CD4-positive, alpha-beta memory T cell (primary cell): ENCODE measurements at regions of chr17 and their contacts with region 1.

Region 1: DNA sequence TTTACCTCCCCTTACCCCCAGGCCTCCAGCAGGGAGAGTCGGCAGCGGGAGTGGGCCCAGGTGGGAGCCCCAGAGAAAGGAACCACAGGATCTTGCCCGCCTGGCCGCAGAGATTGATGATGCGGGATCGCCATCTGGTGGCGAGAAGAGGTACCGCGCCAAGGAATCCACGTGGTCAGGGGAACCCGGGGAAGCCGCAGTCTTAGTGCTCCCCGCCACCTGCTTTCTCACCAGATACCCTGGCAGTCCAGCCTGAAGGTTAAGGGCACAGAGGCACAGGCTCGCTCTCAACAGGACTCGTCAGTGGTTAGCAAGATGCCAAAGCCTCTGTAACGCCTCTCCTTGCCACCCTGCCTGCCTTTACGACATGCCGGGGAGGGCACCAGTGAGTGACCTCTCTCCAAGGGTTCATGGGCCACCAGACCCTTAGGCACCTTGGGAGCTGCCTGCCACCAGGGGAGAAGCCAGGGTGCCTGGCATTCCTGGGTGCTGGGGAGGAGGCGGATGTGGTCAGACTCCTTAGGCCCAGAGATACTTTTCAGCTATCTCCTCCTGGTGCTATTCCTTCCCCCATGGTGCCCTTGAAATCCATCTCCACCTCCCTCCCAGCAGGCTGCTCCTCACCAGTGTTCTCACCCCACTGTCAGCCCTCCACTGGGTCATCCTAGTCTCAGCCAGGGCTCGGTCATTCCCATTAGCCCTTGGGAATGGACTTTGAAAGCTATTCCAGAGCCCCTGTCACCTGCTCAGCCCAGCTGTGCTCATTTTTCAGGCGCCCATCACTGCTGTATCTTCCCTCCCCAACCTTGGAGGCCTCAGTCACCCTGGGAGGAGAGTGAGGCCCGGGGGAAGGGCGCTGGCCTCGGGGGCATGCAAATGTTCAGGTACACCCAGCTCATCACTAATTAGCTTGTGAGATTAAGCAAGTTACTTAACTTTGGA is 5.5 kb upstream of the RHBDF2 start:
- DNase-seq: peak; percentile 83 to 91 (median 86)
- H3K4me3 ChIP-seq: no peak overlapping the region
- H3K4me3 Mint-ChIP-seq: peak overlapping the region in 2 of 8 donors; percentile 15 to 39
- H3K27ac ChIP-seq: no peak overlapping the region
- H3K27ac Mint-ChIP-seq: peak overlapping the region in 6 of 7 donors; percentile 13 to 90 (median 57)
- H3K4me1 ChIP-seq: peaks cover 26% of the 10 kb centered on the region
- H3K4me1 Mint-ChIP-seq: peaks cover 5 to 31% (median 23%) of the 10 kb centered on the region in 4 donors
- H3K27me3 ChIP-seq: no peaks in the 10 kb centered on the region
- H3K27me3 Mint-ChIP-seq: no peaks in the 10 kb centered on the region

Region 2: DNA sequence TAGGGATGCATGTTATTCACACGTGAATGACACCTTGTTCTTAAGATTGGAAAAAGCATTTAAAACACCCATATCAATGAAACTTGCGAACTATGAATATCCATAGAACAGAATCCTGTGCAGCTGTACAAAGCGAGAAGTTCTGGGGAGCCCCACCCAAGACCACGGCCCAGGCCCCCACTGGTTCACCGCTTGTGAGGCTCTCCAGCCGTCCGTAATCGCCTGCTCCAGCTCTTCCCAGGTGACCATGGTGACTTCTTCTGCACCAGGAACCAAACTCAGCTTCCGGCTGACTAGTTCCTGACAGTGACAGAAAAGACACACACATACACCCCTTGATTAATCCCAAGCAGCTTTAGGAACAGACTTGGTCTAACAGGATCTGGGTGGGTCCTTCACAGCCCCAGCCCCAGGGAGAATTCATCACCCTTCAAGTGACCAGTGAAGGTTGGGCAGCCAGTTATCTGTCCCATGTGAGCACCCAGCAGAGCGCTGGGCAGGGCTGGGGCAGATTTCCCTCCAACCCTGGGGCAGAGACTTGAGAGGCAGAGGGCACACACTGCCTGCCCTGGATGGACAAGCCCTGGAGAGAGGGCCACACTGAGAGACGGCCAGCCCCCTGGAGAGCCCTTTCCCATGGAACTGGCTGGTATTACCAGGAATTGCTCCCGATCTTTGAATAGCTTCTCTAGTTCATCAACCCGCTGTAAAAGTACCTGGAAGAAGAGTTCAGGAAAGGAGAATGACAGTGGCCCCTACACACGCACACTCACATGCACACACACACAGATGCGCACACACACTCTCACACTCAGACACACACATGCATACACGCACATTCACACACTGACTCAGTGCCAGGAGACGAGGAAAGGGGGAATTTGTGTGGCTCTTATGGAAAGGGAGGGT is 202.2 kb before region 1 on chr17:
- CTCF ChIA-PET with region 1: interaction called, 12 read pairs
- POLR2A ChIA-PET with region 1: no interaction called
- intact Hi-C with region 1: loop called (anchors 1 kb)
- DNase-seq: no peak
- H3K4me3 ChIP-seq: no peak overlapping the region
- H3K4me3 Mint-ChIP-seq: no peak overlapping the region
- H3K27ac ChIP-seq: no peak overlapping the region
- H3K27ac Mint-ChIP-seq: peak overlapping the region in 1 of 7 donors; percentile 71
- H3K4me1 ChIP-seq: no peaks in the 10 kb centered on the region
- H3K4me1 Mint-ChIP-seq: peaks cover 0 to 1% (median 0%) of the 10 kb centered on the region in 4 donors
- H3K27me3 ChIP-seq: no peaks in the 10 kb centered on the region
- H3K27me3 Mint-ChIP-seq: no peaks in the 10 kb centered on the region

Region 3: GRCh38 chr17:76461765-76462555 is 44.7 kb before region 1 on chr17:
- CTCF ChIA-PET with region 1: interaction called, 161 read pairs
- POLR2A ChIA-PET with region 1: interaction called, 38 read pairs
- intact Hi-C with region 1: loop called (anchors 1 kb)
- DNase-seq: no peak
- H3K4me3 ChIP-seq: no peak overlapping the region
- H3K4me3 Mint-ChIP-seq: no peak overlapping the region
- H3K27ac ChIP-seq: no peak overlapping the region
- H3K27ac Mint-ChIP-seq: peak overlapping the region in 3 of 7 donors; percentile 15 to 80 (median 73)
- H3K4me1 ChIP-seq: peaks cover 4% of the 10 kb centered on the region
- H3K4me1 Mint-ChIP-seq: peaks cover 3 to 6% (median 3%) of the 10 kb centered on the region in 4 donors
- H3K27me3 ChIP-seq: no peaks in the 10 kb centered on the region
- H3K27me3 Mint-ChIP-seq: no peaks in the 10 kb centered on the region

Region 4: GRCh38 chr17:76492989-76493501 is 13.6 kb before region 1 on chr17:
- CTCF ChIA-PET with region 1: interaction called, 23 read pairs
- POLR2A ChIA-PET with region 1: interaction called, 45 read pairs
- intact Hi-C with region 1: no loop called
- DNase-seq: peak; percentile 15 to 53 (median 37)
- H3K4me3 ChIP-seq: peak overlapping the region; percentile 34 to 46
- H3K4me3 Mint-ChIP-seq: peak overlapping the region; percentile 70 to 87 (median 84)
- H3K27ac ChIP-seq: peak overlapping the region; percentile 64
- H3K27ac Mint-ChIP-seq: peak overlapping the region; percentile 74 to 97 (median 94)
- H3K4me1 ChIP-seq: peaks cover 46% of the 10 kb centered on the region
- H3K4me1 Mint-ChIP-seq: peaks cover 17 to 64% (median 42%) of the 10 kb centered on the region in 4 donors
- H3K27me3 ChIP-seq: no peaks in the 10 kb centered on the region
- H3K27me3 Mint-ChIP-seq: no peaks in the 10 kb centered on the region